ENCODE measurements at regions of chr20 and their contacts with region 1.

Region 1: DNA sequence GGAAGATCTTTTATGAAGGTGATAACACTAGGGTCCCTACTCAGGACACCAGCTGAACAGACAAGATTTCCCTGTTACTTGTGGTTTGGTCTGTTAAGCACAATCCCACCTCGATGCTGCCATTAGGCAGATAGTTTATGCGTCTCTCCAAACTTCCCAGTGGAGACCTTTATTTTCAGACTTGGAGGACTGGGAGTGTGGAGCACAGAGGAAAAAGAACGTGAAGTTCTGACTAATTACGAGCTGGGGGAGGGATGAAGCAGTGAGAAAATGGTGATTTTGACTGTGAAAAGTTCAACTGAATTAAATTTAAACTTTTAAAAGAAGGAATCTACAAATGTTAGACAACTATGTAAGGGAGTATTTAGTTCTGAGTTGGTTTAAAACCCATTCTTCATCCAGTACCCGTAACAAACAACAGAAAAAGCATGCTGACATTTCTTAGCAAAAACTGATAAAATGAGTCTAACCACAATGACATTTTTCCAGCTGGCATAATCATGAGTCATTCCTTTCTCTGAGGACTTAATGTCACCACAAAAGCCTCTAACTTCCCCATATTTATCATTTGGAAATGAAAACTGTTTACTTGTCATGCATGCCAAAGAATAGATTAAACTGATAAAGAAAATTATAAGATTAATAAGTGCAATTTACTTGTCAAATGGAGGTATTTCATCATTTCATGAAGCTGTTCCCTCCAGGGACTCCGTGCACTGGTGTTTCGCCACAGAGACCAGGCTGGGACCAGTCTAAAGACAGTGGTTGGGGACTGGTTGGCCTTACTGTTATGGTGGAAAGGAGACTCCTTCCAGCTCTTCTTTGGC is 113.3 kb upstream of the SSTR4 start:
- DNase-seq: no peak
- ATAC-seq: peak in 1 of 8 donors; percentile 37
- H3K4me3 ChIP-seq: no peak overlapping the region
- H3K27ac ChIP-seq: peak overlapping the region in 2 of 10 donors; percentile 6 to 47
- H3K4me1 ChIP-seq: peaks cover 0 to 29% (median 12%) of the 10 kb centered on the region in 9 donors
- H3K27me3 ChIP-seq: peaks cover 0 to 91% (median 2%) of the 10 kb centered on the region in 7 donors
- CTCF ChIP-seq: no peak

Region 2: GRCh38 chr20:22974353-22974752 is 52.5 kb after region 1 on chr20:
- intact Hi-C with region 1: loop called in 1 of 10 experiments (anchors 5 kb)
- DNase-seq: no peak
- ATAC-seq: no peak
- H3K4me3 ChIP-seq: no peak overlapping the region
- H3K27ac ChIP-seq: no peak overlapping the region
- H3K4me1 ChIP-seq: peaks cover 3 to 25% (median 16%) of the 10 kb centered on the region in 9 donors
- H3K27me3 ChIP-seq: peaks cover 0 to 22% (median 4%) of the 10 kb centered on the region in 7 donors
- CTCF ChIP-seq: peak in 5 of 9 donors; percentile 18 to 52 (median 18)

Region 3: GRCh38 chr20:23034721-23035671 is 113.2 kb after region 1 on chr20 and contains the start of gene SSTR4:
- intact Hi-C with region 1: no loop called
- DNase-seq: no peak
- ATAC-seq: no peak
- H3K4me3 ChIP-seq: peak within 1 kb of the TSS in 5 of 10 donors; percentile 28 to 41 (median 35)
- H3K27ac ChIP-seq: no peak within 1 kb of the TSS
- H3K4me1 ChIP-seq: peaks cover 0 to 20% (median 15%) of the 10 kb centered on the region in 9 donors
- H3K27me3 ChIP-seq: peaks cover 0 to 68% (median 42%) of the 10 kb centered on the region in 7 donors
- CTCF ChIP-seq: no peak
- total RNA-seq, gene SSTR4: not detected

Region 4: DNA sequence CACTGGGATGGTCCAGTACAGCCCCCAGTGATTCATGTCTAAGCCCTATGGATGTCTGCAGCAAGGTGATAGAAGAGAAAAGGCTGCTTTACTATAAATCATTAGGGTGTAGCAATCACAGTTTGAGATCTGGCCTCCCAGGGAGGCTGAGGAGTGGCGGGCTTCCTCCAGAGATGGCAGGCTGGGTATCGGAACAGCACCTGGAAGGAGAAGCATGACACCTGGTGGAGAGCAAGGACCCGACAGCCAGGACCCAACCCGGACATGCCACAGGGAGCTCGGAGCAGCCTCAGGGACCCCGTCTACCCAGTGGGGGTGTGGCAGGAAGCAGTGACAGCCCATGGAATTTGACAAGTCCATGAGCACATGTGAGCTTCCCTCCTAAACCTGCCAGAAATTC is 279.1 kb after region 1 on chr20:
- intact Hi-C with region 1: loop called in 1 of 10 experiments (anchors 10 kb)
- DNase-seq: peak; percentile 33 to 48
- ATAC-seq: peak in 7 of 8 donors; percentile 33 to 58 (median 38)
- H3K4me3 ChIP-seq: no peak overlapping the region
- H3K27ac ChIP-seq: no peak overlapping the region
- H3K4me1 ChIP-seq: peaks cover 12 to 54% (median 44%) of the 10 kb centered on the region in 9 donors
- H3K27me3 ChIP-seq: no peaks in the 10 kb centered on the region
- CTCF ChIP-seq: peak; percentile 16 to 59 (median 48)

Measured in heart right ventricle (tissue), 16 donors.